ENCODE measurements at regions of chr9 and their contacts with region 1.

Region 1: GRCh38 chr9:5450359-5451091 is at the start of gene CD274:
- DNase-seq: peak; percentile 63 to 97 (median 78)

Region 2: GRCh38 chr9:5408596-5408995 is 41.9 kb before region 1 on chr9:
- intact Hi-C with region 1: no loop called
- DNase-seq: no peak

Region 3: DNA sequence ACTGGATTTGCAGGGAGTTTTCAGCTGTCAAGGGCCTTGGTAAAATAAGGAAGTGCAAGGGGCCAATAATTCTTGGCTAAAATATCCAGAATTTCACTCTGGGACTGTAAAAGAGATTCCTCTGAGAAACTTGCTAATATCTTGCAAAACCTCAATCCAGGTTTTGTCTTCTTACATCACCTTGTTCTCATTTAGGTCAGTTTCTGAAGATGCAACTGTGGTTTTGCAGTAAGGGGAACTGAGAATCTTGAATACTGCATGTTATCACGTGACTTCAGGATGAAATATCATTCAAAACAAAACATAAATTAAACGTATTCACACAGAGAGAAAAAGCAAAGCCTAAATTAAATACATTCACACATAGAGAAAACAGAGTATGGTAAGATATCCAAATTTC is 143.4 kb after region 1 on chr9:
- intact Hi-C with region 1: loop called (anchors 5 kb)
- DNase-seq: no peak